ENCODE measurements at regions of chr9 and their contacts with region 1.

Region 1: GRCh38 chr9:84953797-84954705 is 284.5 kb downstream of the NTRK2 start:
- DNase-seq: peak; percentile 82
- ATAC-seq: peak; percentile 95 to 96

Region 2: GRCh38 chr9:84397151-84397728 is 556.8 kb before region 1 on chr9:
- intact Hi-C with region 1: loop called in 1 of 2 experiments (anchors 10 kb)
- DNase-seq: peak; percentile 48
- ATAC-seq: peak; percentile 80 to 83

Region 3: DNA sequence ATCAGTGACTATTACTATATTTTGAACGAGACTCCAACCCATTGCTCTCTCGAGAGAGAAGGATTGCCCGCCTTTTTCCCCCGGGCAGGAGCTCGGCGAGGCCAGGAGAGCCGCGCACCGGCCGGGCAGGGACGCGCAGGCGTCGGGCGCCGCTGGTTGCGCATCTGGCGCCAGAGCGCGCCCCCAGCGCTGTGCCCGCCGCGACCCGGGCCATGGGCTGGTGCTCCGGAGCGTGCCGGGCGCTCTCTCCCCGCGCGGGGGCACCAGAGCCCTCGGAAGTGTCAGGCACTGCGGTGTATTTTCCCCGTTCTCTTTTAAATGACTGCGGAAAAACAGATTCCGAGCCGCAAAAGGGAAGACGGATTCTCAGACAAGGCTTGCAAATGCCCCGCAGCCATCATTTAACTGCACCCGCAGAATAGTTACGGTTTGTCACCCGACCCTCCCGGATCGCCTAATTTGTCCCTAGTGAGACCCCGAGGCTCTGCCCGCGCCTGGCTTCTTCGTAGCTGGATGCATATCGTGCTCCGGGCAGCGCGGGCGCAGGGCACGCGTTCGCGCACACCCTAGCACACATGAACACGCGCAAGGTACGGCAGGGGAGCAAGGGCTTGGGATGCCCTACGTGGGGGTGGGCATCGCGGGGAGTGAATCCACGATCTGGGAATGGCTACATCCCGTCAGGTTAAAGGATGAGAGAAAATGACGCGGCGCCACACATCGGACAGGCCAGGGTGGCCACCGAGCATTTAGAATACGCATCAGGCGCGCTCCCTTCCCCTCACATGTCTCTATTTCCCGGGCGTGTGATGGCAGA is 285.6 kb before region 1 on chr9:
- intact Hi-C with region 1: loop called in 1 of 2 experiments (anchors 2 kb)
- DNase-seq: peak; percentile 81
- ATAC-seq: peak; percentile 89 to 90

Region 4: DNA sequence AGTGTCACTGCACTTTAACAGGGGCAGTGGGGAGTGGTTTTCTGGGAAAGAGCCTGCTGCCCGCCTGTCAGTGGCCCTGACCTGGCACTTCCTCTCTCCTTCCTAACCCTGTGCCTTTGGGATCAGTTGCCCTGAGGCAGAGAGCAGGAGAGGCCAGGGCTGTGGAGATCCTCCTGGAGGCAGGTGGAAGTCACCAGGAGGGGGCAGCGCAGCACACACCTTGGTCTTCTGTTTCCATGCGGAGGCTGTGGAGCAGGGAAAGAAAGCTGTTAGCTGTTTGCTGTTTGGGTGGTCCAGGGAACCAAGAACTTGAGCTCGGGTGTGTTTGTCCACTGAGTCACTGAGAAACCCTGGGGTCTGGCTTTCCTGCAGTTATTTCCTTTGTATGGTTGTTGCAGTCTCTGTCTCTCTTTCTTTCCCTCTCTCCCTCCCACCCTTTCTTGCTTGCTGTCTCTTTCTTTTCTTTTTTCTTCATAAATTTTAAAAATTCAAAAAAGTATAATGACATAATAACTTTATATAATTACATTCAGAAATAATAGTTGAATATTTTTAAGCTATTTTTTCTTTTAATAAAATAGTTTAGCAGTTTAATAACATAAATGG is 256.4 kb before region 1 on chr9:
- intact Hi-C with region 1: loop called in 1 of 2 experiments (anchors 5 kb)
- DNase-seq: peak; percentile 76
- ATAC-seq: peak; percentile 70 to 74

Region 5: DNA sequence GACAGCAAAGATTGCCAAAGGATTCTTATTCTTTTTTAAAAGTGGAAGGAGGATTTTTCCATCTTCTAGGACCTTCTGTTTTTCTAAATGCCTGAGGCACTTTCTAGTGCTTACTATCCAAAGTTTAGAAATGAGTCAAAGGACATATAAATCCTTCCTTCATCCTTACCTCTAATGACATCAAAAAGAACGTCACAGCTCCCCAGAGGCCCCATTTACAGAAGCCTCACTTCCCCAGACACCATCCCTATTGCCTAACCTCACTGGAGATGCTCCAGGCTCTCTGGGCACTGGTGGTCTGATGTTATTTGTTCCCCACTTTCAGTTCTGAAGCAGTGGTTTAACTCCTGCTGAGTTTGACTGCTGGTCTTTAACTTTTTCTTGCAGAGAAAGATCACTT is 283.4 kb after region 1 on chr9:
- intact Hi-C with region 1: no loop called
- DNase-seq: no peak
- ATAC-seq: no peak

Region 6: GRCh38 chr9:85258823-85259370 is 304.8 kb after region 1 on chr9:
- intact Hi-C with region 1: loop called in 1 of 2 experiments (anchors 10 kb)
- DNase-seq: peak; percentile 64
- ATAC-seq: peak; percentile 96